ENCODE measurements at regions of chr3 and their contacts with region 1.

Region 1: DNA sequence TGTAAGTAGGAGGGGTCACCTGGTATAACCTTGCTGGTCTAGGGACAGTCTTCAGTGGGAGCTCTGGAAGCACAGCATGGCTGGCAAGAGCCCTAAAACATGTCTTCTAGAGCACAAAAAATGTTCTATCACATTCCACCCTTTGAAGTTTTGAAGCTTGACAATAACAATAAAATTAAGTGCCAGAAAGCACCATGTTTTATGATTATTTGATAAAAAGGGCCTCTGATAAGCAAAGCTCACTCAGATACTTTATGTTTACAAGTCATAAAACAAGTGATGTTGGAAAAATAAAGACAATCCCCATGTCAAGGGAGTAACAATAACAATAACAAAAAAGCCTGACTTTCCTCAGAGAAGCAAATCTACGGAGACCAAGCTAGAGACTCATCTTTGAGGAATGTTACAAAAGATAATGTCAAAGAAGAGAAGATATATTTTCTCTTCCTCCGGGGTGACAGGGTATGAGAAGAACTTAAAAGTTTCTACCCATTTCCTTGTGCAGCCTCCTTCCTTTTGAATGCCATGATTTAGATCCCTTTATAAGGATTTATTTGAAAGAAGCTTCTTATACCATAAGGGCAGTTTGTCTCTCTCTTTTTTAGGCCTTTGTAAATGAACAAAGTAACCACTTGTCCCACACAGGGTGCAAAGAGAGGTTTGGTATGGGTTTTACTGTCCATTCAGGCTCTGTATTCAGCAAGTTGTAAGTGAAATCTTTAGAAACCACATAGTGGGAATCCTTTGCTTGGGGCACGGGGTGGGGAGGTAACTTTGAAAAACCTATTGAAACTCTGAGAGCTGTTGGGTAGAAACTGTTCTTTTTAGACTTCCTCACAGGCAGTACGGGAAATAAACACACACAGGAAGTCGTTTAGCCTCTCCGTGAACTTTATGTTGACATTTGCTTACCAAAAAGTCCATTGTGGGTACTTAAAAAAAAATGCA is 109.6 kb upstream of the RBMS3 start:
- DNase-seq: no peak
- ATAC-seq: peak; percentile 13

Region 2: DNA sequence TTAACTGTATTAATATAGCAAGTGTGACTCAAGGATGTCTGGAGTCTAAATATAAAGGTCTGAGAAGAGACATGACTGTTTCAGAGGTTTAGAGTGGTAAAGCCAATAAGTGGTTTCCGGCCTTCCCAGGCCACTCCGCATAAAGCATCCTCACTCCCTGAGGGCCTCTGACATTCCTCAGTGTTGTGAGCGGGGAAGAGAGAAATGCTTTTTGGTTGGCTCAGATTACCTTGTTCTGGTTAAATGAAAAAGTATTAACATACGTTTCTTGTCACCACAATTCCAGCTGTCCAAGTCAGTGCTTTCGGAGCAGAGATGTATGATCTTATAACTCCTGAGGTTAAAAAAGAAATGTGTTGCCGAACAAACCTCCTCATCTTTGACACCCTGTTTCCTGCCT is 213.3 kb after region 1 on chr3:
- intact Hi-C with region 1: no loop called
- DNase-seq: no peak
- ATAC-seq: peak; percentile 67

Region 3: GRCh38 chr3:29412110-29412509 is 240.8 kb after region 1 on chr3:
- intact Hi-C with region 1: loop called (anchors 10 kb)
- DNase-seq: no peak
- ATAC-seq: no peak